H1 (cell line): ENCODE measurements at regions of chr2 and their contacts with region 1.

Region 1: GRCh38 chr2:160994141-160995002 is 165.9 kb upstream of the TANK start:
- DNase-seq: peak in 1 of 2 experiments; percentile 85
- H3K4me3 ChIP-seq: no peak overlapping the region
- H3K27ac ChIP-seq: no peak overlapping the region
- H3K4me1 ChIP-seq: no peaks in the 10 kb centered on the region; a peak in 1 of 7 replicates
- H3K27me3 ChIP-seq: no peaks in the 10 kb centered on the region
- CTCF ChIP-seq: peak in 2 of 3 experiments; percentile 74 to 82; a peak in 3 of 4 replicates
- EP300 ChIP-seq: no peak
- POLR2A ChIP-seq: no peak
- RAD21 ChIP-seq: peak; percentile 92 to 94

Region 2: DNA sequence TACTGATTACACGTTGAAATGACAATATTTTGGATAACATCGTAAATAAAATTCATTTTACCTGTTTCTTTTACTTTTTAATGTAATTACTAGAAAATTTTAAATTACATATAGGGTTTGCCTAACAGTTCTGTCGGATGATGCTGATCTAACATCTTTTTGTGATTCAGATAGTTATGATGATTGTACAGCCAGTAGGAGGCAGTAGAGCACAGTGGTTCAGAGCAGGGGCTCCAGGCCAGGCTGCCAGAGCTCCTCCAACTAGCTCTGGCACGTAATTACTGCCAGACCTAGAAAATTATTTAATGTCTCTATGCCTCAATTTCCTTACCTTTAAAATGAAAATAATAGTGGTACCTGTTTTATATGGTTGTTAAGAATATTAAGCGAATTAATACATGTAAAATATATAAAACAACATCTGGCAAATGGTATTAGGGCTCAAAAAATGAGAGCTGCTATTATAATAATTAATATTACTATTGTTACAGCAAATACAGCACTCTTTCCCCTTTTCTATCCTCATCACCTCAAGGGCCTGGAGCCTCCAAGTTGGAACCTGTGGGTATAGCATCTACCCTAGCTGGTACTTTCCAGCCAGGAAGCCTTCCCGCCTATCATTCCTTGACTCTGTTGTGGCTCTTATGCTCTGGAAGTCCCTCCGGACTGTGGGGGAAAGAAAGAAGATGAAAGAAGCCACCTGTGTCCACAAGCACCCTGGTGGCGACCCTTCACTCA is 884.3 kb before region 1 on chr2:
- CTCF ChIA-PET with region 1: interaction called, 13 read pairs
- POLR2A ChIA-PET with region 1: no interaction called
- DNase-seq: no peak
- H3K4me3 ChIP-seq: no peak overlapping the region
- H3K27ac ChIP-seq: no peak overlapping the region
- H3K4me1 ChIP-seq: peaks cover 0 to 2% (median 0%) of the 10 kb centered on the region in 4 experiments; a peak in 1 of 7 replicates
- H3K27me3 ChIP-seq: no peaks in the 10 kb centered on the region
- CTCF ChIP-seq: peak; percentile 54 to 82 (median 74)
- EP300 ChIP-seq: no peak
- POLR2A ChIP-seq: no peak
- RAD21 ChIP-seq: peak; percentile 94 to 95

Region 3: DNA sequence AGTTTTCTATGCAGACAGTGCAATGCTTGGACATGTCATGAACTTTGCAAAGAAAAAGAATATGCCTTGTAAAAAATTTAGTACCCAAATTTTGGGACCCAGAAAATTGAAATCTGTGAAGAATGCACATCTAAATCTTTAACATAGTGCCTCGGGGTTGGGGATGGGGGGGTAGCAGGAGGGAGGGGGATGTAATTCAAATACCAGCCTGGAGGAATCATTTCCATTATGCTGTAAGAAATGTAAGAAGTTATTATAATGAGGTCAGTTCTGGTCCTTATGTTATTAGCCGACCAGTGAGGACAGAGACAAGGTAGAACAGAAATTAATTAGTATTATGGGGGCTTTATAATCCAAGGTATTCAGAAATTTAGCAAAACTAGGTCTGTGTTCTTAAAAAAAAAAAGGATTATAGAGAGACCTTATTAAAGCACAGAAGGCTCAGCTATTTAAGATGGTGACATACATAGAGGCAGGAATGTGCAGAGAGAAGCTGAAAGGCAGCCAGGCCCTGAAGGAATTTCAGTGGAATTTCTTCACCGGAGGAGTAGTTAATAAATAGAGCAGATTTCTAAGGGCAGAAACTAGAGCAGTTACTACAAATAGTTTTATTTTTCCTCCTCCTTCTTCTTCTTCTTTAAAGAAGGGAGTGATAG is 411.8 kb before region 1 on chr2:
- CTCF ChIA-PET with region 1: interaction called, 11 read pairs
- POLR2A ChIA-PET with region 1: no interaction called
- DNase-seq: no peak
- H3K4me3 ChIP-seq: no peak overlapping the region
- H3K27ac ChIP-seq: no peak overlapping the region
- H3K4me1 ChIP-seq: peaks cover 0 to 12% (median 3%) of the 10 kb centered on the region in 4 experiments; a peak in 5 of 7 replicates
- H3K27me3 ChIP-seq: no peaks in the 10 kb centered on the region
- CTCF ChIP-seq: no peak
- EP300 ChIP-seq: no peak
- POLR2A ChIP-seq: no peak
- RAD21 ChIP-seq: no peak

Region 4: GRCh38 chr2:160606341-160606740 is 388.0 kb before region 1 on chr2:
- CTCF ChIA-PET with region 1: no interaction called
- POLR2A ChIA-PET with region 1: no interaction called
- DNase-seq: no peak
- H3K4me3 ChIP-seq: no peak overlapping the region
- H3K27ac ChIP-seq: no peak overlapping the region
- H3K4me1 ChIP-seq: peaks cover 0 to 3% (median 0%) of the 10 kb centered on the region in 4 experiments; a peak in 1 of 7 replicates
- H3K27me3 ChIP-seq: no peaks in the 10 kb centered on the region
- CTCF ChIP-seq: no peak
- EP300 ChIP-seq: no peak
- POLR2A ChIP-seq: no peak
- RAD21 ChIP-seq: no peak

Region 5: GRCh38 chr2:160970052-160970965 is 24.1 kb before region 1 on chr2:
- CTCF ChIA-PET with region 1: interaction called, 12 read pairs
- POLR2A ChIA-PET with region 1: no interaction called
- DNase-seq: peak in 1 of 2 experiments; percentile 38
- H3K4me3 ChIP-seq: peak overlapping the region in 1 of 4 experiments; percentile 26; a peak in 1 of 8 replicates
- H3K27ac ChIP-seq: peak overlapping the region; percentile 78
- H3K4me1 ChIP-seq: no peaks in the 10 kb centered on the region
- H3K27me3 ChIP-seq: no peaks in the 10 kb centered on the region
- CTCF ChIP-seq: peak in 2 of 3 experiments; percentile 55 to 63; a peak in 3 of 4 replicates
- EP300 ChIP-seq: peak in 1 of 2 experiments; percentile 81; a peak in 1 of 3 replicates
- POLR2A ChIP-seq: no peak
- RAD21 ChIP-seq: peak; percentile 92

Region 6: DNA sequence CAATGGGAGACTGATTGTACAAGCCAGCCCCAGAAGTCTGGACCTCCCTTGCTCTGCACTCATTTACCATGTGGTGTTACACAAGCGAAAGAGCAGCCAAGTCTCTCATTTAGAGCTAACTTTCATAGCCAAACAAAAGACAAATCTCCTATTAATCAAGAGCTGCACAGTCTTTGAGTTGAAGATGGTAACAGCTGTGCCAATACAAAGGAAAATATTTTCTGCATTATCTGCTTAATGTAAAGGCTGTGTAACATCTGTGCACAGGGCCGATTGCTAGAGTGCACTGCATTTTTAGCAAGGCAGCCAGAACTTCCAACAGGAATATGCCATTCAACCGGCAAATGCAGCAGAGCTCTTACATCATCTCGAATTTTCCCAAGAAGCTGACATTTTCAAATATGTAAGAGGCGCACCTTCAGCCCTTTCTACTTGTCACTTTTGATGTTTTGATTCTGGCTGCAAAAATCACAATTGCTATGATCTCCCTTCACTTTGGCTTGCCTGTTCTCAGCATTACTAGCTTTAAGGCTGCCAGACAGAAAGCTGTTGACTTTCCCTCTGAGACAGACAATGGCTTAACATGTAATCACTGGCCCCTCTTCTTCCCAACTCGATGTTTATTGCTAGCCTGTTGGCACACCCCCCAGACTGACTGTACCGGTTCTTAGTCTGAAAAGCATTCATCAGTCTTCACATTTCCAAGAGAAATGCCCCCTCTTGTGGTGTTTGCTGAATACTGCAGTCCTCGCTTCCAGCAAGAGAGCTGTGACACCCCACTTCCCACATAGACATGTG is 69.0 kb after region 1 on chr2:
- CTCF ChIA-PET with region 1: interaction called, 23 read pairs
- POLR2A ChIA-PET with region 1: no interaction called
- DNase-seq: peak; percentile 41 to 85
- H3K4me3 ChIP-seq: no peak overlapping the region
- H3K27ac ChIP-seq: no peak overlapping the region
- H3K4me1 ChIP-seq: peaks cover 0 to 5% (median 0%) of the 10 kb centered on the region in 4 experiments; a peak in 2 of 7 replicates
- H3K27me3 ChIP-seq: no peaks in the 10 kb centered on the region
- CTCF ChIP-seq: peak; percentile 50 to 90 (median 79)
- EP300 ChIP-seq: no peak
- POLR2A ChIP-seq: no peak
- RAD21 ChIP-seq: peak; percentile 90 to 94